Activated B cell treated with CpG ODN at 0.5 μM for 24 hours (primary cell): ENCODE measurements at regions of chr11 and their contacts with region 1.

Region 1: DNA sequence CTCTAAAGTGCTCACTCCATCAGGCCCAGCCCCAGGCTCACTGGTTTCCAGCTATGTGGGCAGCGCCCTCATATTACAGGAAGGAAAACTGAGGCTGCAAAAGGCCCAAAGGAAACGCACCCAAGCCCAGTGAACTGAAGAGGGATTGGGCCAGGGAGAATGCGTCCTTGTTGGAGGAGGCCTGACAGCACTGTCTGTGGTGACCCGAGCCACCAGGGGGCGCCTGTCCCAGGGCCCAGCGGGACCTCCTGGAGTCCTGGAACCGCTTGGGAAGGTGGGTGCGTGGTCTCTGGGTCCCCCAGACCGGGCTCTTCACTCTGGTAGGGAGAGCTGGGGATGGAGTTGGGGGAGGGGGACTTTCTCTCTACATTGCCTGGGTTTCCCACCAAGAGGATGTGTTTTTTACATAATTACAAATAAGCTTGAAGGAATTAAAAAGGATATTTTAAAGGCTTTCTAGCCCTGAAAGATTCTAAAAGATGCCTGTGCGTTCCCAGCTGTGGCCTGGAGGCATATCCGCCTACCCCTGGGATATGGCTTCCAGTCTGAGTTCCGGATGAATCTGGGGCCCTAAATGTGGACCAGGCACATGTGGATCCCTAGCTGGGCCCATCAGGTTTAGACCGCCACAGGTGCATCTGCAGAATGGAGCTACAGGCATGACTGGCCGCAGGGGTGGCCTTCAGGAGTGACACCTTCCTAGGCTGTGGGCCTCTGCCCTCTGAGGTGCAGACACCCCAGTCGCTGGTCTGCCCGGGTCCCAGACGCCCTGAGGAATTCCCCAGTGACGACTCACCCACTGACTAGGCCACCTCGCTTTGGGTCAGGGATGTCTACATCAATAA is 4.2 kb downstream of the SPI1 start:
- DNase-seq: peak; percentile 81
- ATAC-seq: no peak
- H3K4me3 Mint-ChIP-seq: no peak overlapping the region
- H3K27ac Mint-ChIP-seq: peak overlapping the region; percentile 70
- H3K4me1 Mint-ChIP-seq: peaks cover 54% of the 10 kb centered on the region
- H3K27me3 Mint-ChIP-seq: no peaks in the 10 kb centered on the region
- CTCF ChIP-seq: peak; percentile 83

Region 2: GRCh38 chr11:47394322-47395222 is 20.5 kb after region 1 on chr11:
- CTCF ChIA-PET with region 1: interaction called, 41 read pairs
- POLR2A ChIA-PET with region 1: interaction called, 106 read pairs
- intact Hi-C with region 1: loop called (anchors 1 kb)
- DNase-seq: peak; percentile 56
- ATAC-seq: peak; percentile 81
- H3K4me3 Mint-ChIP-seq: peak overlapping the region; percentile 64
- H3K27ac Mint-ChIP-seq: peak overlapping the region; percentile 95
- H3K4me1 Mint-ChIP-seq: peaks cover 70% of the 10 kb centered on the region
- H3K27me3 Mint-ChIP-seq: no peaks in the 10 kb centered on the region
- CTCF ChIP-seq: no peak

Region 3: DNA sequence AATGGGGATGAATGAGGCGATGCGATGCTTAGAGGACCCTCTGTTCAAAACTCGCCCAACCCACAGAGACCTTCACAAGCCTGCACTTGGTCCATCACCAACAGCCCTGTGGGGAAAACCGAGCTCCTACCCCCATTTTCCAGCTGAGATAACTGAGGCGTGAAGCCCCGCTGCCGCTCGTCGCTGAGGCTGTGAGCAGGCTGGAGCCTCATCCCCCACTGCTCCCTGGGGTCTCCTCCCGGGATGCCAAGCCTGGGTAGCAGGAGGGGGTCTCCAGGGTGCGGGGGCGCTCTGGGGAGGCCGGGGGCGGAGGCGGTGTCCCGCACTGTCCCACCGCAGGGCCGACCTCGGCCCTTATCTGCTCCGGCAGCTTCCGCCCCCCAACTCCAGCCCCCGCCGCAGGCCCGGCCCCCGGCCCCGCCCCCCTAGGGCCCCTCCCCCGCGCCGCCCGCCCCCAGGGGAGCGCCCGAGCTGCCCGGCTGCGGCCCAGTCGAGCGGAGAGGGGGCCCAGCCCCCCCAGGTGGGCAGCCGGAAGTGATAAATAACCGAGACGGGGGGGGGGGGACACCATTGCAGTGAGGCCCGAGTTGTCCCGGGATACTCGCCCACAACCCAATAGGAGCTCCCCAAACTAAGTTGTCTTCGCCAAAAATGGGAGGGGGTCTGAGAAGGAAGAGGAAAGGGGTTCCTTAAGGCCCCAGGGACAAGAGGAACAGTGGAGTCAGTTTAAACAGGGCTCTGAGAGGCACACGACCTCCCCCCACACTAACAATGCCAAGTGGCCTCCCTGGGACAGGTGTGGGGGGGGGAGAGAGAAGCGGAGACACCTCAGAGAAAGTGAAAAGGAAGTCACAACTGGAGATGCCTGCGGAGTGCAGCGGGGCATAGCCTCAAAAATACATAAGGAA is 26.0 kb after region 1 on chr11:
- CTCF ChIA-PET with region 1: interaction called, 41 read pairs
- POLR2A ChIA-PET with region 1: interaction called, 106 read pairs
- intact Hi-C with region 1: loop called (anchors 1 kb)
- DNase-seq: peak; percentile 56
- ATAC-seq: peak; percentile 79
- H3K4me3 Mint-ChIP-seq: peak overlapping the region; percentile 88
- H3K27ac Mint-ChIP-seq: peak overlapping the region; percentile 95
- H3K4me1 Mint-ChIP-seq: peaks cover 47% of the 10 kb centered on the region
- H3K27me3 Mint-ChIP-seq: no peaks in the 10 kb centered on the region
- CTCF ChIP-seq: no peak

Region 4: DNA sequence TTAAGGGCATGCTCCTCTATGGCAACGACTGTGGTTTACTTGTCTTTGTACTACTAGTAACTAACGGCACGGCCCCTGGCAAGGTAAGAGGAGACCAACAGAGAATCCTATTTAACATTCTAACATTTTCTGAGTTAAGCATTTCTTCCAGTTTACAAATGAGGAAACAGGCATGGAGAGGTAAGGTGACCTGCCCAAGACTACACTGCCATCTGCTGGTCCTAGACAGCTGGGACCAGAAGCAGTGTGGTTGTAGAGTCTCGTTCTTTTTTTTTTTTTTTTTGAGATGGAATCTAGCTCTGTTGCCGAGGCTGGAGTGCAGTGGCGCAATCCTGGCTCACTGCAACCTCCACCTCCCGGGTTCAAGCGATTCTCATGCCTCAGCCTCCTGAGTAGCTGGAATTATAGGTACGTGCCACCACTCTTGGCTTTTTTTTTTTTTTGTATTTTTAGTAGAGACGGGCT is 80.1 kb after region 1 on chr11:
- CTCF ChIA-PET with region 1: interaction called, 3 read pairs
- POLR2A ChIA-PET with region 1: interaction called, 5 read pairs
- intact Hi-C with region 1: loop called (anchors 1 kb)
- DNase-seq: peak; percentile 24
- ATAC-seq: peak; percentile 96
- H3K4me3 Mint-ChIP-seq: no peak overlapping the region
- H3K27ac Mint-ChIP-seq: no peak overlapping the region
- H3K4me1 Mint-ChIP-seq: peaks cover 5% of the 10 kb centered on the region
- H3K27me3 Mint-ChIP-seq: no peaks in the 10 kb centered on the region
- CTCF ChIP-seq: no peak

Region 5: GRCh38 chr11:47514825-47515647 is 140.9 kb after region 1 on chr11:
- CTCF ChIA-PET with region 1: no interaction called
- POLR2A ChIA-PET with region 1: no interaction called
- intact Hi-C with region 1: no loop called
- DNase-seq: no peak
- ATAC-seq: peak; percentile 41
- H3K4me3 Mint-ChIP-seq: peak overlapping the region; percentile 68
- H3K27ac Mint-ChIP-seq: peak overlapping the region; percentile 65
- H3K4me1 Mint-ChIP-seq: peaks cover 86% of the 10 kb centered on the region
- H3K27me3 Mint-ChIP-seq: no peaks in the 10 kb centered on the region
- CTCF ChIP-seq: no peak